Common myeloid progenitor, CD34-positive (primary cell): ENCODE measurements at regions of chr7 and their contacts with region 1.

Region 1: DNA sequence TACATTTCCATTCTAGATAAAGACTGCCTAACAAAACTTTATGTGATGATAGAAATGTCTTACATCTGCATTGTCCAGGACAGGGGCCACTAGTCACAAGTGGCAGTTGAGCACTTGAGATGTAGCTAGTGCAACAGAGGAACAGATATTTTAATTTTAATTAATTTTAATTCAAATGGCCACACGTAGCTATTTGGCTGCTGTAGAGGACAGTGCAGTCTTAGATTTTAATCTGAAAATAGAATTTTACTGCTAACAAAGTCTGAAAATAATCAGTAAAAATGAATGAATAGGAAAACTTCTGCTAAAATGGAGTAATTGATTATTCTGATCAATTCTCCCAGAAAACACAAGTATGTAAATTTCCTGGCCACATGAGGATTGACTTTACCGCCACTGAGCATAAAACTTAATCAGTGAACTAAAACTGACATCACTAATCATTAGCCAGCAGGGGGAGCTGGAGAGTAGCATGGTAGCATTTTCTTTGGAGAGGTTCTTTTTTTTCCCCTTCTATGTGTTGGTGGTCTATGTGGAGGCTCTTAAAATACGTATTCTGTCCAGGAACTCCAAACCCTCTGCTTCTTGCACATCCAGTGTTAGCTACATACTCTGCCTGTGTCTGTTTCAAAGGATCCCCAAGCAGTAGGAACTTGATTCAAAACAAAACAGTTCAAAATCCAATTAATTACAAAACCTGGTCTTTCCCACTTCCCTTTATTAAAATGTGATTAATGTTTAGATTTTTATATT is 52.1 kb downstream of the TSPAN12 start:
- DNase-seq: peak; percentile 75 to 85 (median 78)
- H3K4me3 ChIP-seq: peak overlapping the region in 1 of 7 experiments; percentile 14
- H3K27ac ChIP-seq: no peak overlapping the region
- H3K4me1 ChIP-seq: no peaks in the 10 kb centered on the region
- H3K27me3 ChIP-seq: no peaks in the 10 kb centered on the region

Region 2: GRCh38 chr7:120774481-120774880 is 31.3 kb before region 1 on chr7:
- CTCF ChIA-PET with region 1: no interaction called
- POLR2A ChIA-PET with region 1: no interaction called
- DNase-seq: no peak
- H3K4me3 ChIP-seq: no peak overlapping the region
- H3K27ac ChIP-seq: no peak overlapping the region
- H3K4me1 ChIP-seq: no peaks in the 10 kb centered on the region
- H3K27me3 ChIP-seq: no peaks in the 10 kb centered on the region

Region 3: DNA sequence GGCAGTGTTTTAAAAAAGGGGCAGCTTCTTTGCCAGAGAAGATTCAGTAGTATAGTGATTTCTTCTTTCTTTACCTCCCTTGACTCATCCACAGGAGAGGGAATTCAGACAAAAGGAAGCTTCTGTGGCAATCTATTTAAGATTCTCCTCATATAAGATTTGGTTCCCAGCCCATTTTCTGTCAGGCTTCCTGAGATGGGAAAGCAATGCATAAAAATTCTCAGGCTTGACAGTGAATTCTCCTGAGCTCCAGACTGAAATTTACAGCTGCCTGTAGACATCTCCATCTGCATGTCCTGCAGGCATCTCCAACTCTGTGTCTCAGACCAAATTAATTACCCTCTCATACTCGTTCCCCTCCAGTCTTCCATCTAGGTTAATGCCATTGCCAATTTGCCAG is 20.7 kb before region 1 on chr7:
- CTCF ChIA-PET with region 1: interaction called, 14 read pairs
- POLR2A ChIA-PET with region 1: no interaction called
- DNase-seq: no peak
- H3K4me3 ChIP-seq: no peak overlapping the region
- H3K27ac ChIP-seq: no peak overlapping the region
- H3K4me1 ChIP-seq: no peaks in the 10 kb centered on the region
- H3K27me3 ChIP-seq: no peaks in the 10 kb centered on the region

Region 4: GRCh38 chr7:120941064-120941463 is 135.3 kb after region 1 on chr7:
- CTCF ChIA-PET with region 1: interaction called, 10 read pairs
- POLR2A ChIA-PET with region 1: no interaction called
- DNase-seq: peak; percentile 37 to 50 (median 50)
- H3K4me3 ChIP-seq: no peak overlapping the region
- H3K27ac ChIP-seq: no peak overlapping the region
- H3K4me1 ChIP-seq: peaks cover 0 to 10% (median 0%) of the 10 kb centered on the region in 4 experiments
- H3K27me3 ChIP-seq: no peaks in the 10 kb centered on the region